Calu3 (cell line): ENCODE measurements at regions of chr2 and their contacts with region 1.

Region 1: DNA sequence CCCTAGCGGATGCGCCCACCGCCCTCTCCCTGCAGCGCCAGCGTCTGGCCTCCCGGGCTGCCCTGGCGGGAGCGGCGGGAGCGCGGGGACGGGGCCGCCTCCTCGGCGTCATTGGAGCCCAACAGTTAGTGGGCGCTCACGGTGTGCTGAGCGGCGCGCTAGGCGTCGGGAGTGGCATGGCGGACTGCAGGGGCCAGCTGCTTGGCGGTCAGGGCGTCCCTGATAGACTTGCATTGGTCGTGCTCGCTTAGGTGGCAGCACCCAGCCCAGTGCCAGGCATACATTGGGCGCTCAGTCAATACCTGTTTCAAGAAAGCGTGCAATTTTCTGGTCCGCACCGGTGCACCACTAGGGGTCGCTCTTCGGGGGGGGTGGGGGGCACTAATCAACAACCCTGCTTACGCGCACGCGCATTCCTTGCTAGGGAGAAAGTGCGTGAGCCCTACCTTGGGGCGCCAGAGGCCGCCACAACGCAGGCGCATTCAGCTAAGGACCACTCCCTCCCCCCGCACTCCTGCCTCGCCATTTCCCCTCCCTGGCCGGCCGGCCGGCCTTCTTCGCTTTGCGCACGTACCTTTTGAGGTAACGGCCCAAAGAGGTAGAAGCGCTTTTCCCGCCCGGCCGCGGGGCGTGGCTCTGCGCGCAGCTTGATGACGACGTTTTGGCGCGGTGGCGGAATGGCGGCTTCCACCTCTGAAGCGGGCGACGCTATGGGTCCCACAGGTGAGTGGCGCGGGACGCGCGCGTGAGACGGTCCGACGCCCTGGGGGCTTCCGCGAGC is 411 bp upstream of the MZT2A start:
- DNase-seq: peak; percentile 95
- H3K4me3 Mint-ChIP-seq: peak overlapping the region; percentile 95
- H3K27ac Mint-ChIP-seq: peak overlapping the region; percentile 94
- H3K4me1 Mint-ChIP-seq: peaks cover 17% of the 10 kb centered on the region
- H3K27me3 Mint-ChIP-seq: no peaks in the 10 kb centered on the region
- CTCF ChIP-seq: peak; percentile 80

Region 2: GRCh38 chr2:131413148-131413747 is 79.4 kb before region 1 on chr2:
- CTCF ChIA-PET with region 1: interaction called, 6 read pairs
- intact Hi-C with region 1: loop called (anchors 1 kb)
- DNase-seq: peak; percentile 37
- H3K4me3 Mint-ChIP-seq: no peak overlapping the region
- H3K27ac Mint-ChIP-seq: no peak overlapping the region
- H3K4me1 Mint-ChIP-seq: no peaks in the 10 kb centered on the region
- H3K27me3 Mint-ChIP-seq: peaks cover 72% of the 10 kb centered on the region
- CTCF ChIP-seq: peak; percentile 57

Region 3: DNA sequence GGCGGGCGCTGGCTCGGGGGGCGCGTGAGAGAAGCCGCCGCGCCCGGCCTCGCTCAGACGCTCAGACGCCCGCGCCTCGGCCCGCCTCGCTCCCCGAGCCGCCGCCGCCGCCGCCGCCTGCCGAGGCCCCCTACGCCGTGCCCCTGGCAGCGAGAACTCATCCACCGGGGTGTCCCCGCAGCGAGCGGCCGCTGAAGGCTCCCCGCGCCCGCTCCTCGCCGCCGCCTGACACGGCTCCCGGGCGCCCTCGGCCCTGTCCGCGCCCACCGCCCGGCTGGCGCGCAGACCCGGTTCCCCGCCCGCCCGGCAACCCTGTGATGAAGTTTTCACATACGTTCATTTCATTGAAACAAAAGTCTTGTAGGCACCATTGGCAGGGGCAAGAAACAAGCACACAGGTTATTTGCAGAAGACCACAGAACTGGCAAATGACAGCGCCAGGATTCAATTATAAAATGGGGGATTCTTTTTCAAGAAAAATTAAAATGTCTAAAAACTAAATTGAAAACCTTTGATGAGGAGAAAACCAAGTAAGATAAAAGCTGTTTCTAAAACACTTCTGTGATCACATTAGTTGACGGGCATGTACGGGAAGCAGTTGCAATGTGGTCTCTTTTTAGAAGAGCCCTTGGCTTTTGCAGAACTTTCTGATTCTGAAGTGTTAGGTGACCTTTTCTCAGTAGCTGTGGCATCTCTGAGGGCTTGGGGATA is 67.2 kb before region 1 on chr2:
- CTCF ChIA-PET with region 1: no interaction called
- intact Hi-C with region 1: no loop called
- DNase-seq: no peak
- H3K4me3 Mint-ChIP-seq: no peak overlapping the region
- H3K27ac Mint-ChIP-seq: no peak overlapping the region
- H3K4me1 Mint-ChIP-seq: peaks cover 8% of the 10 kb centered on the region
- H3K27me3 Mint-ChIP-seq: peaks cover 78% of the 10 kb centered on the region
- CTCF ChIP-seq: no peak